Mammary epithelial cell (primary cell): ENCODE measurements at regions of chr5 and their contacts with region 1.

Region 1: GRCh38 chr5:36177715-36178523 is 26.0 kb downstream of the SKP2 start:
- DNase-seq: peak; percentile 18
- H3K4me3 ChIP-seq: no peak overlapping the region
- H3K27ac ChIP-seq: no peak overlapping the region
- H3K4me1 ChIP-seq: no peaks in the 10 kb centered on the region
- H3K27me3 ChIP-seq: no peaks in the 10 kb centered on the region
- CTCF ChIP-seq: peak; percentile 62 to 65

Region 2: GRCh38 chr5:36241631-36242533 is 64.0 kb after region 1 on chr5 and contains the start of gene NADK2:
- CTCF ChIA-PET with region 1: no interaction called
- dilution Hi-C with region 1: no loop called
- in situ Hi-C with region 1: no loop called
- intact Hi-C with region 1: loop called (anchors 1 kb)
- DNase-seq: peak; percentile 92
- H3K4me3 ChIP-seq: peak within 1 kb of the TSS; percentile 86 to 88 (median 86)
- H3K27ac ChIP-seq: peak within 1 kb of the TSS; percentile 82
- H3K4me1 ChIP-seq: peaks cover 18% of the 10 kb centered on the region
- H3K27me3 ChIP-seq: no peaks in the 10 kb centered on the region
- CTCF ChIP-seq: peak; percentile 23 to 52
- total RNA-seq, gene NADK2: 18.5 to 21.1 TPM

Region 3: DNA sequence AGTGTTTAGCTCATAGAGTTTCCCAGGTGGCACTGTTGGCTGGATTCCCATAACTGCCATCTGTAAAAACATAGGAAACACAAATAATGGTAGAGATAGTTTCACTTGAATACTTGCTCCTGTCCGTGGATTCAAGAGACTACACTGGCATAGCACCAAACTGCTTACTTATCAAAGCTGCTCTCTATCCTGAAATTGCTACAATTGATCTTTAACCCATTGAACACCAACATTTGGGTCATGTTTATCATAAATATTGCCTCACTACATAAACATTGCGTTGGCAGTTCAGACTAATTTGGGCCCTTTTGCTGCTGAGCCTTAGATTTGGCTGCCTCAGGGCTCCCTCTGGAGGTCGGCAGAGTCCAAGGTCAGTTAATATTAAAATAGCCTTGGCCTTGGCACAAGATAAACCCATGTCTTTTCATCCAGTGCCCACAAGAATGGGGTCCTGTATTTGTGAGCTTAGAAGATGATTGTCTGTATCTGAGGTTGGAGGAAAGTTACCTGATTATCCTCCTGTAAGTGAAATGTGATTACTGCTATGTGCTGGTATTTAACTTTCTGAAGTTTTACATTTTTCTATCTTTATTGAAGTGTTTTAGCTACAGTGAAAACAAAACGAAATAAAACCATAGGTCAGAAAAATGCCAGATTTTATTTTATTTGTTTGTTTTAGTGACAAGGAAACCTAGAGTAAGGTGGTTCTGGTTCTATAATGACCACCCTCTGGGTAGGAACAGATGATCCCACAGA is 127.8 kb after region 1 on chr5:
- CTCF ChIA-PET with region 1: no interaction called
- dilution Hi-C with region 1: no loop called
- in situ Hi-C with region 1: no loop called
- intact Hi-C with region 1: loop called (anchors 1 kb)
- DNase-seq: peak; percentile 18
- H3K4me3 ChIP-seq: no peak overlapping the region
- H3K27ac ChIP-seq: no peak overlapping the region
- H3K4me1 ChIP-seq: peaks cover 4% of the 10 kb centered on the region
- H3K27me3 ChIP-seq: peaks cover 6% of the 10 kb centered on the region
- CTCF ChIP-seq: peak; percentile 50 to 75